B cell (primary cell): ENCODE measurements at regions of chr15 and their contacts with region 1.

Region 1: DNA sequence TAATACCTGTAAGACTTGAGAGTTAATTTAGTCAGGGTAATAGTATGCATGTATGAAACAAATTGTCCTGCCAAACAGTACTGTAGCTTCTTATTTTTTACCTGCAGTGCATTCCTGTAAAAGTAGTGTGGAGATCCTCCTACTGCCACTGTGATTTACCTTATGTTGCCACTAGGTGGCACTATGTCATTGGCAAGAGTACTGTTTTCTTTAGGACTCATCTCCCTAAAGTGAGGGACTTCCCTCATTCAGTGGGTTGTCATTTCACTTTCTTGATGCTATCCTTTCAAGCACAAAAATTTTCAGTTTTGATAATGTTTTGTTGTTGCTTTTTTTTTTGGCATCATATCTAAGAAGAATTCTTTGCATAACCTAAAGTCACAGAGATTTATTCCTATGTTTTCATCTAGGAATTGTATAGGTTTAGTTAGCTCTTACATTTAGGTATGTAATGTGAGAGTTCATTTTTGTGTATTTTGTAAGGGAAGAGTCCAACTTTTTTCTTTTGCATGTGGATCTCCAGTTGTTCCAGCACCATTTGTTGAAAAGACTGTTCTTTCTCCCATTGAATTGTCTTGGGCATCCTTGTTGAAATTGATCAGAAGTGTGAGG is 105.7 kb downstream of the AKAP13 start:
- DNase-seq: peak; percentile 83
- ATAC-seq: peak; percentile 91
- H3K4me3 ChIP-seq: no peak overlapping the region
- H3K4me3 Mint-ChIP-seq: no peak overlapping the region
- H3K27ac ChIP-seq: no peak overlapping the region
- H3K27ac Mint-ChIP-seq: peak overlapping the region; percentile 54
- H3K4me1 ChIP-seq: peaks cover 41 to 47% of the 10 kb centered on the region in 2 donors
- H3K4me1 Mint-ChIP-seq: peaks cover 74% of the 10 kb centered on the region
- H3K27me3 ChIP-seq: no peaks in the 10 kb centered on the region
- H3K27me3 Mint-ChIP-seq: no peaks in the 10 kb centered on the region
- CTCF ChIP-seq: peak; percentile 95

Region 2: DNA sequence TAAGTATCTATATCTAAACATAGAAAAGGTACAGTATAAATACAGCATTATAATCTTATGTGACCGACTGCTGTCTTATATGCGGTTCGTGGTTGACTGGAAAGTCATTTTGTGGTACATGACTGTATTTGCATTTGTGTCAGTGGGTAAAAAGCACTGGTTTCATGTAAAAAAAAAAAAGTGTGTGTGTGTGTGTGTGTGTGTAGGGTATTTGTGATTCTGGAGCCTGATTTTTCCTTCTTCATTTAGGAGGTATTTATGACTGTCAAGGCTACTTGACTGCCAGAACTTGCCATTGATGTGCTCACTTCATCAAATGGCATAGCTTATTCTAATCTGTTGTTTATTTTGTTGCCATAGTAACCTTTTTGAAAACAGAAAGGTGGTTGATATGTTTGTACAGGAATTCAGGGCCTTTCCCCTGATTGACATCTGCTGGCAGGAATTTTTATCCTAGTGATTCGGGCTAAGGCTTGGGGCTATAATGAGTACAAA is 42.4 kb before region 1 on chr15:
- CTCF ChIA-PET with region 1: interaction called, 3 read pairs
- POLR2A ChIA-PET with region 1: no interaction called
- intact Hi-C with region 1: loop called (anchors 5 kb)
- DNase-seq: peak; percentile 77
- ATAC-seq: peak; percentile 71
- H3K4me3 ChIP-seq: peak overlapping the region in 1 of 5 experiments; percentile 46
- H3K4me3 Mint-ChIP-seq: peak overlapping the region; percentile 64
- H3K27ac ChIP-seq: peak overlapping the region; percentile 53 to 80
- H3K27ac Mint-ChIP-seq: peak overlapping the region; percentile 82
- H3K4me1 ChIP-seq: peaks cover 35 to 41% of the 10 kb centered on the region in 2 donors
- H3K4me1 Mint-ChIP-seq: peaks cover 68% of the 10 kb centered on the region
- H3K27me3 ChIP-seq: no peaks in the 10 kb centered on the region
- H3K27me3 Mint-ChIP-seq: no peaks in the 10 kb centered on the region
- CTCF ChIP-seq: no peak

Region 3: DNA sequence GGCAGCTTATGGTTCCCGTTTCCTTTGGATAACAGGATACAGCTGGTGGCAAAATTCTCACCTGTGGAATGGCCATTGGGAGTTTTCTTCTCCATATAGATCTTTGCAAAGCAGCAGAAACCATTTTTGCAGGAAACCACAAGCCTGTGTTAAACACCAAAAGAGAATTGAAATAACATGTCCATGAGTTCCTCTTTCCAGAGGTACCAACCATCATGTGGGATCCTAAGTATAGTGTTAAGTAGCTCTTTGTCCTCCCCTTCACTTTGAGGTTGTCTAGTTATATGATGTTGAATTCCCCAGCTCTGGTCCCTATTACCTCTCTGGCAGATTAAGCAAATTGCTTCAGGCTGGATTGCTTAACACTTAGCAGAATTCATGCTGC is 10.8 kb before region 1 on chr15:
- CTCF ChIA-PET with region 1: interaction called, 15 read pairs
- POLR2A ChIA-PET with region 1: interaction called, 4 read pairs
- intact Hi-C with region 1: loop called (anchors 1 kb)
- DNase-seq: peak; percentile 71
- ATAC-seq: peak; percentile 50
- H3K4me3 ChIP-seq: peak overlapping the region in 2 of 5 experiments; percentile 46 to 64
- H3K4me3 Mint-ChIP-seq: peak overlapping the region; percentile 48
- H3K27ac ChIP-seq: peak overlapping the region; percentile 51 to 78
- H3K27ac Mint-ChIP-seq: peak overlapping the region; percentile 47
- H3K4me1 ChIP-seq: peaks cover 72 to 78% of the 10 kb centered on the region in 2 donors
- H3K4me1 Mint-ChIP-seq: peaks cover 83% of the 10 kb centered on the region
- H3K27me3 ChIP-seq: no peaks in the 10 kb centered on the region
- H3K27me3 Mint-ChIP-seq: no peaks in the 10 kb centered on the region
- CTCF ChIP-seq: no peak

Region 4: DNA sequence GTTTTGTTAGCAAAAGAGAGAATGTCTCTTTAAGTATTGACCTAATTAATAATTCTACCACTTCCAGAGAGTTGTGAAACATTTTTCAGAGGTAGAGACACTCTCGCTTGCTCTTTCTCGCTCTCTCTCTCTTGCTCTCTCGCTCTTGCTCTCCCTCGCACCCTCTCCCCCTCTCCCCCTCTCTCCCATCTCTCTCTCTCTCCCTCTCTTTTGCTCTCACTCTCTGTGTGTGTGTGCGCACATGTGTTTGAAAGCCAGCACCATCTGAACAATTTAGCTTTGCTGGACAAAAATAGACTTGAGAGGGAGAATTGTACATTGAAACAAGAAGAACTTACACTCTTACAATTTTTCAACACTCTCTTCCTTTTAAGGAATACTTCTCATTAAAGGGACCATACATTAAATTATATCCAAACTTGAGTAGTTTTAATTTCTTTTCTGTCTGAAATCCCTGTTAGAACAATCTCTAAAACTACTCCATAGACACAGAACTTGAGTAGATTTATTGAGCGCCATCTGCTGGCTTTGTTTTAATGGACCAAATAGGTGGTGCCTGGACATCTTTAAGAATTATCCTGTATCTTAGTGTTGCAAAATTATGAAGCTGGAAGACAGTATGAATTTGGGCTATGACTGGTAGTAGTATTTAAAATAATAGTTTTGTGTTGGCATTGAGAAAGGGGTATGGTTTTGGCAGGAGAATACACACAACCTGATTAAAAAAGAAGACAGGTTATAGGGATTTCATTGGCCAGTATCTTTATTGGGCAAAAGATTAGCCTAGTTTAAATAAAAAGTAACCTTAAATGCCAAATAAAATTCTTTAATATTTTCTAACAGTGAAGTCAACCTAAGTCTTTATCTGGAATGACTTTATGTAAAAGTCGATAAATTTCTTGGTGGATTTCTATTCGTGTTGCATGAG is 19.0 kb after region 1 on chr15:
- CTCF ChIA-PET with region 1: interaction called, 30 read pairs
- POLR2A ChIA-PET with region 1: no interaction called
- intact Hi-C with region 1: loop called (anchors 2 kb)
- DNase-seq: peak; percentile 71
- ATAC-seq: no peak
- H3K4me3 ChIP-seq: no peak overlapping the region
- H3K4me3 Mint-ChIP-seq: no peak overlapping the region
- H3K27ac ChIP-seq: peak overlapping the region in 1 of 2 donors; percentile 35
- H3K27ac Mint-ChIP-seq: no peak overlapping the region
- H3K4me1 ChIP-seq: peaks cover 13 to 16% of the 10 kb centered on the region in 2 donors
- H3K4me1 Mint-ChIP-seq: peaks cover 48% of the 10 kb centered on the region
- H3K27me3 ChIP-seq: no peaks in the 10 kb centered on the region
- H3K27me3 Mint-ChIP-seq: no peaks in the 10 kb centered on the region
- CTCF ChIP-seq: peak; percentile 74

Region 5: DNA sequence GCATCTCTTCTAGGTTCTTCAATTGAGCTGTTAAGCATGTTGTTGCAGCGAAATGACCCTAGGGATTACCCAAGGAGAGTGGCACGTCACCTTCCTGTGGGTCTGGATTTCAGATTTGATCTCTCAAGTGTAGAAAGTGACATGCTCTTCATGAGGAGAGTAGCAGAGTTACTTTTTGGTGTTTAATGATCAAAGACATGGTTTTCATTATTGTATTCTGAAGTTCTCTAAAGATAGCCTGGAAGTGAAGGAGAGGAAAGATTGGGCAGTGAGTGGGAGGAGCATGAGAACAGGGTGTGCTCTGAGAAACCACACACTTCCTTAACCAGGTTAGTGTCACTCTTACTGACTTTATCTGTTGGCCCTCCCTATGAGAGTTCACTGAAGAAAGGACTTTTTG is 48.0 kb after region 1 on chr15:
- CTCF ChIA-PET with region 1: interaction called, 8 read pairs
- POLR2A ChIA-PET with region 1: no interaction called
- intact Hi-C with region 1: loop called (anchors 2 kb)
- DNase-seq: peak; percentile 69
- ATAC-seq: peak; percentile 75
- H3K4me3 ChIP-seq: peak overlapping the region in 2 of 5 experiments; percentile 11 to 23
- H3K4me3 Mint-ChIP-seq: peak overlapping the region; percentile 77
- H3K27ac ChIP-seq: peak overlapping the region; percentile 78 to 81
- H3K27ac Mint-ChIP-seq: peak overlapping the region; percentile 100
- H3K4me1 ChIP-seq: peaks cover 67 to 74% of the 10 kb centered on the region in 2 donors
- H3K4me1 Mint-ChIP-seq: peaks cover 79% of the 10 kb centered on the region
- H3K27me3 ChIP-seq: no peaks in the 10 kb centered on the region
- H3K27me3 Mint-ChIP-seq: no peaks in the 10 kb centered on the region
- CTCF ChIP-seq: no peak

Region 6: GRCh38 chr15:85618956-85619491 is 133.0 kb after region 1 on chr15:
- CTCF ChIA-PET with region 1: no interaction called
- POLR2A ChIA-PET with region 1: no interaction called
- intact Hi-C with region 1: loop called (anchors 10 kb)
- DNase-seq: peak; percentile 26
- ATAC-seq: peak; percentile 48
- H3K4me3 ChIP-seq: no peak overlapping the region
- H3K4me3 Mint-ChIP-seq: no peak overlapping the region
- H3K27ac ChIP-seq: peak overlapping the region in 1 of 2 donors; percentile 8
- H3K27ac Mint-ChIP-seq: no peak overlapping the region
- H3K4me1 ChIP-seq: peaks cover 26% of the 10 kb centered on the region in 2 donors
- H3K4me1 Mint-ChIP-seq: peaks cover 28% of the 10 kb centered on the region
- H3K27me3 ChIP-seq: no peaks in the 10 kb centered on the region
- H3K27me3 Mint-ChIP-seq: no peaks in the 10 kb centered on the region
- CTCF ChIP-seq: no peak

Region 7: GRCh38 chr15:85707519-85708338 is 221.7 kb after region 1 on chr15:
- CTCF ChIA-PET with region 1: interaction called, 3 read pairs
- POLR2A ChIA-PET with region 1: no interaction called
- intact Hi-C with region 1: loop called (anchors 5 kb)
- DNase-seq: no peak
- ATAC-seq: peak; percentile 37
- H3K4me3 ChIP-seq: peak overlapping the region; percentile 9 to 66 (median 29)
- H3K4me3 Mint-ChIP-seq: peak overlapping the region; percentile 82
- H3K27ac ChIP-seq: peak overlapping the region; percentile 96 to 99
- H3K27ac Mint-ChIP-seq: peak overlapping the region; percentile 96
- H3K4me1 ChIP-seq: peaks cover 51 to 56% of the 10 kb centered on the region in 2 donors
- H3K4me1 Mint-ChIP-seq: peaks cover 71% of the 10 kb centered on the region
- H3K27me3 ChIP-seq: no peaks in the 10 kb centered on the region
- H3K27me3 Mint-ChIP-seq: no peaks in the 10 kb centered on the region
- CTCF ChIP-seq: no peak

Region 8: GRCh38 chr15:85788771-85789589 is 302.9 kb after region 1 on chr15:
- CTCF ChIA-PET with region 1: no interaction called
- POLR2A ChIA-PET with region 1: no interaction called
- intact Hi-C with region 1: no loop called
- DNase-seq: no peak
- ATAC-seq: no peak
- H3K4me3 ChIP-seq: no peak overlapping the region
- H3K4me3 Mint-ChIP-seq: no peak overlapping the region
- H3K27ac ChIP-seq: no peak overlapping the region
- H3K27ac Mint-ChIP-seq: no peak overlapping the region
- H3K4me1 ChIP-seq: peaks cover 11 to 19% of the 10 kb centered on the region in 2 donors
- H3K4me1 Mint-ChIP-seq: peaks cover 24% of the 10 kb centered on the region
- H3K27me3 ChIP-seq: peaks cover 0 to 5% (median 0%) of the 10 kb centered on the region in 4 experiments
- H3K27me3 Mint-ChIP-seq: no peaks in the 10 kb centered on the region
- CTCF ChIP-seq: no peak